ENCODE measurements at regions of chr5 and their contacts with region 1.

Region 1: DNA sequence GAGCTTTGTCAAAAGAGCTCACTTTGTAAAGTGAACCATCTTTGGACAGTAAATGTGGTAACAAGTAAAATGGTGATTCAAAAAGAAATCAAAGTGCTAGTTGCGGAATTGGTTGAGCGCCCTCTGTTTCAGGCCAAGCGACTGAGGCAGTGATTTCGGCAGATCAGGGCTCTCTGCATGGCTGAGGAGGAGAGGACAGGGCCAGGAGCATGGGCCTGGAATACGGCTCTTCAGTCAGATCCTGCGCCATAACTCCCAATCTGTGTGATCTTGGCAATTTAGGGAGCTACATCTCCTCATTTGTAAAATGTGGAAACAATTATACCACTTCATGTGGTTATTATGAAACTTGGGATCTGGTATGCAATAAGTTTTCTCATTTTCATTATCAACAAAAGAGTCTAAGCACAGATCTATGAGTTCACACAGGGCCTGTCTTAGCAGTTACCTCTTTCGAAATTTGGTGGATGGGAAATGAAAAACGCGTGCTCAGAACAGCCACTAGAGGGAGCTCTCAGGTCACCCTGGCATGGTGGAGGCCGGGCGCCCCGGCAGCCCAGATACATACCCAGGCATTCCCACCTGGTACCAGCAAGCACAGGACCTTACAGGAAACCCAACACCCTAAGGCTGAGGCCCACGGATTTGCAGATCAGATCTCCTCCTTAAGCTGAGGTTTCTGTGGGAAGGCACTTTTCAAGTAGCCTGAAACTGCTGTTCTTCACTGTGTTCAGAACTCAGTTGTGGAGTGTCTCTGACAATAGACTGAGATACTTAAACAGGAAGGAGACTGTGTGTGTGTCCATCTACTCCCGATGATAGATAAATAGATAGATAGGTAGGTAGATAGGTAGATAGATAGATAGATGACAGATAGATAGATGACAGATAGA is 303.7 kb downstream of the RAB3C start:
- DNase-seq: peak; percentile 83
- H3K4me3 Mint-ChIP-seq: peak overlapping the region; percentile 24
- H3K27ac Mint-ChIP-seq: peak overlapping the region; percentile 70
- H3K4me1 Mint-ChIP-seq: peaks cover 40% of the 10 kb centered on the region
- H3K27me3 Mint-ChIP-seq: peaks cover 7% of the 10 kb centered on the region

Region 2: DNA sequence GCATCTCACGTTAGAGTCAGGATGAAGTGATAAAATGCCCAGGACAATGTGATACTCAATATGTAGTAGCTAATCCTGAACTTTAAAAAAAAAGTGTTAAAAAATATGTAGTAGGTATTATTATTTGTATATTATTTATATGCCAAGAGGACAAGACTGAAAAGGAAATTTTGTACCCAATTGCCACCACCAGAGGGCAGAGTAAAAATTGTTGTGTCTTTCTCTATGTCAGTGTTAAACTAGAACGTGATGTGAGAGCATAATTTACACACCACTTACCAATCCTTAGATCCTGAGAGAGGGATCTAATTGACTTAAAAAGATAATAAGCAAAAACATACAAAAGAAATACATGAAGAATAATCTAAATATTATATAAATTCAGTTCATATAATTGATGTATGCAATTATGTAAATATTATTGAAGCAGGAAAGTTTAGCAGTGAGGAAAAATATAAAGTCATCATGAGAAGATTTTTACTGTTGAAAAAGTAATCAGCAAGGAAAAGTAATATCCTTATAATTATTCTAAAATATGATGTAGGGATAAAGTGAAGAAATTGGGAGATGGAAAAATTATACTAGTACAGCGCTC is 14.8 kb before region 1 on chr5:
- CTCF ChIA-PET with region 1: interaction called, 36 read pairs
- POLR2A ChIA-PET with region 1: no interaction called
- intact Hi-C with region 1: no loop called
- DNase-seq: no peak
- H3K4me3 Mint-ChIP-seq: no peak overlapping the region
- H3K27ac Mint-ChIP-seq: no peak overlapping the region
- H3K4me1 Mint-ChIP-seq: no peaks in the 10 kb centered on the region
- H3K27me3 Mint-ChIP-seq: peaks cover 12% of the 10 kb centered on the region

Region 3: DNA sequence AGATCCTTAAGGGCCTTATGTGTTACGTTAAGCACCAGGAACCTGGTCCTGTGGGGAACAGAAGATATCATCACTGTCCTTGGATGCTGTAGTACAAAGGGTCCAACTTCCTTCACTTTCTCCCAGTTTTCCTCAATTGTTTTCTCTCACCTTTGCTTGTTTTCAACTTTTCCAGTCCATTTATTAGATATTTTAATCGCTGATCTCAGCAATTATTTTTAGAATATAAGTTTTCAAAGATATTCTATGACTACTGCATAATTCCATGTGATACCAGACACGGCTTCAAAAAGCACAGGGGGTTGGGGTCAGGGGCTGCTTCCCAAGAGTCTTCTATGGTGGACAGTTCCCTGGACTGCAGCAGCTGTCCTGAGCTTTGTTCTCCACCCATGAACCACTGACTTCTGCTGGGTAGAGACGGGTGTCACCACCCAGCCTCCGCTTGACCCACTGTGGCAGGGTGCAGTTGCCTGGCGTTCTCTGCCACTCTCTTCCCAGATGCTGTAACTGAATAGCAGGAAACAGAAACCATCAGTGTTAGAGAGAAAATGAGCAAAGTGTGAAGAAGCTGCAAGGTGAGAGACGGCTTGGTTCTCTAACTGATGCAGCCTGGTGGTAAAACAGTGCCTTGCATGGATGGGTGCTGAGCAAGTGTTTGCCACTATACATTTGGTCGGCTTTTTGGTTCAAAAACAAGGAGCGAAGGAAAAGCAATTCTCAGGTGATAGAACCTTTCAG is 79.3 kb after region 1 on chr5:
- CTCF ChIA-PET with region 1: interaction called, 11 read pairs
- POLR2A ChIA-PET with region 1: interaction called, 4 read pairs
- intact Hi-C with region 1: loop called (anchors 2 kb)
- DNase-seq: no peak
- H3K4me3 Mint-ChIP-seq: no peak overlapping the region
- H3K27ac Mint-ChIP-seq: no peak overlapping the region
- H3K4me1 Mint-ChIP-seq: peaks cover 15% of the 10 kb centered on the region
- H3K27me3 Mint-ChIP-seq: no peaks in the 10 kb centered on the region

Region 4: DNA sequence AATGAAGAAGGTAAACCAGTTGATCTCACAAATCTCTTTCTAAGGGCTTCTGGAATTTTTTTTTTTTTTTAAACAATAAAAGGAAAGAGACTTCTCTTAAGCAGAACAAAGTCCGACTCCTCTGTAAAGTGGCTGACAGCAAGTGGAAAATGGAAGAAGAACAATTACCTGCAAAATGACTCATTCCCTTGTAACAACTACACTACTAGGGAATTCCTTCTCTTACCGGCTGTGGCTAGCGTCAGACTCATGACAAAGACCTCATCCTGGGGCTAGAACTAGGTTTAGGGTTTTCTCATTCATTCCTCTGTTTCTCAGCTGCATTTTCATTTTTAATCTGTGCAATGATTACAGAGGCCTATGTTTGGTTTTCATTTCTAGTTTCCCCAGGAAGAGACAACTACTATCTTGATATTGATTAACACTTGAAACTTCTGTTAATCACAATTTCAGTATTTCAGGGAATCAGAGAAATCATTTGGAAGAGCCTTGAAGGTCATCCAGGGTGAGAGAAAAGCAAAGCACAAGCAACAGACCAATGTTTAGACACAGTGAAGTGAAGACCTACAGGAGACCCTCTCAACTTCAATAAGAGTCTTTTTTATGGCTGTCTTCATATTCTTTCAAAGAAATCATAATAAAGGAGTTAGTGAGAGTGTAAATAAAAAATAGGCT is 134.2 kb after region 1 on chr5:
- CTCF ChIA-PET with region 1: interaction called, 8 read pairs
- POLR2A ChIA-PET with region 1: interaction called, 3 read pairs
- intact Hi-C with region 1: loop called (anchors 1 kb)
- DNase-seq: peak; percentile 67
- H3K4me3 Mint-ChIP-seq: peak overlapping the region; percentile 17
- H3K27ac Mint-ChIP-seq: peak overlapping the region; percentile 87
- H3K4me1 Mint-ChIP-seq: peaks cover 50% of the 10 kb centered on the region
- H3K27me3 Mint-ChIP-seq: no peaks in the 10 kb centered on the region

Region 5: GRCh38 chr5:59126708-59127573 is 240.4 kb after region 1 on chr5:
- CTCF ChIA-PET with region 1: interaction called, 10 read pairs
- POLR2A ChIA-PET with region 1: interaction called, 4 read pairs
- intact Hi-C with region 1: loop called (anchors 1 kb)
- DNase-seq: no peak
- H3K4me3 Mint-ChIP-seq: no peak overlapping the region
- H3K27ac Mint-ChIP-seq: no peak overlapping the region
- H3K4me1 Mint-ChIP-seq: peaks cover 15% of the 10 kb centered on the region
- H3K27me3 Mint-ChIP-seq: no peaks in the 10 kb centered on the region

Region 6: GRCh38 chr5:59238126-59238902 is 351.8 kb after region 1 on chr5:
- CTCF ChIA-PET with region 1: interaction called, 3 read pairs
- POLR2A ChIA-PET with region 1: no interaction called
- intact Hi-C with region 1: loop called (anchors 1 kb)
- DNase-seq: peak; percentile 9
- H3K4me3 Mint-ChIP-seq: peak overlapping the region; percentile 7
- H3K27ac Mint-ChIP-seq: peak overlapping the region; percentile 18
- H3K4me1 Mint-ChIP-seq: peaks cover 19% of the 10 kb centered on the region
- H3K27me3 Mint-ChIP-seq: peaks cover 51% of the 10 kb centered on the region